ENCODE measurements at regions of chr12 and their contacts with region 1.

Region 1: GRCh38 chr12:6764011-6764828 is 1.9 kb upstream of the PTMS start:
- DNase-seq: peak; percentile 100
- H3K4me3 ChIP-seq: peak overlapping the region; percentile 97
- H3K27ac ChIP-seq: peak overlapping the region; percentile 89
- H3K4me1 ChIP-seq: peaks cover 36% of the 10 kb centered on the region
- H3K27me3 ChIP-seq: no peaks in the 10 kb centered on the region
- CTCF ChIP-seq: no peak

Region 2: GRCh38 chr12:6723607-6724396 is 40.4 kb before region 1 on chr12 and contains the start of gene COPS7A:
- CTCF ChIA-PET with region 1: no interaction called
- POLR2A ChIA-PET with region 1: interaction called, 3 read pairs
- intact Hi-C with region 1: loop called (anchors 1 kb)
- DNase-seq: peak; percentile 99
- H3K4me3 ChIP-seq: peak within 1 kb of the TSS; percentile 56
- H3K27ac ChIP-seq: peak within 1 kb of the TSS; percentile 87
- H3K4me1 ChIP-seq: peaks cover 10% of the 10 kb centered on the region
- H3K27me3 ChIP-seq: no peaks in the 10 kb centered on the region
- CTCF ChIP-seq: no peak
- total RNA-seq, gene COPS7A: 67.2 and 67.7 TPM in 2 replicates

Region 3: GRCh38 chr12:6825398-6826124 is 61.3 kb after region 1 on chr12:
- CTCF ChIA-PET with region 1: interaction called, 6 read pairs
- POLR2A ChIA-PET with region 1: no interaction called
- intact Hi-C with region 1: loop called (anchors 5 kb)
- DNase-seq: peak; percentile 85
- H3K4me3 ChIP-seq: no peak overlapping the region
- H3K27ac ChIP-seq: peak overlapping the region; percentile 11
- H3K4me1 ChIP-seq: peaks cover 37% of the 10 kb centered on the region
- H3K27me3 ChIP-seq: no peaks in the 10 kb centered on the region
- CTCF ChIP-seq: peak; percentile 92

Region 4: GRCh38 chr12:6965026-6965661 is 200.9 kb after region 1 on chr12:
- CTCF ChIA-PET with region 1: no interaction called
- POLR2A ChIA-PET with region 1: no interaction called
- intact Hi-C with region 1: loop called (anchors 10 kb)
- DNase-seq: peak; percentile 95
- H3K4me3 ChIP-seq: no peak overlapping the region
- H3K27ac ChIP-seq: peak overlapping the region; percentile 77
- H3K4me1 ChIP-seq: peaks cover 60% of the 10 kb centered on the region
- H3K27me3 ChIP-seq: no peaks in the 10 kb centered on the region
- CTCF ChIP-seq: peak; percentile 96

Measured in A673 (cell line).